Calu3 (cell line): ENCODE measurements at regions of chr6 and their contacts with region 1.

Region 1: GRCh38 chr6:144334131-144334708 is 49.1 kb downstream of the UTRN start:
- DNase-seq: no peak
- H3K4me3 Mint-ChIP-seq: peak overlapping the region; percentile 40
- H3K27ac Mint-ChIP-seq: no peak overlapping the region
- H3K4me1 Mint-ChIP-seq: peaks cover 64% of the 10 kb centered on the region
- H3K27me3 Mint-ChIP-seq: no peaks in the 10 kb centered on the region
- CTCF ChIP-seq: no peak

Region 2: DNA sequence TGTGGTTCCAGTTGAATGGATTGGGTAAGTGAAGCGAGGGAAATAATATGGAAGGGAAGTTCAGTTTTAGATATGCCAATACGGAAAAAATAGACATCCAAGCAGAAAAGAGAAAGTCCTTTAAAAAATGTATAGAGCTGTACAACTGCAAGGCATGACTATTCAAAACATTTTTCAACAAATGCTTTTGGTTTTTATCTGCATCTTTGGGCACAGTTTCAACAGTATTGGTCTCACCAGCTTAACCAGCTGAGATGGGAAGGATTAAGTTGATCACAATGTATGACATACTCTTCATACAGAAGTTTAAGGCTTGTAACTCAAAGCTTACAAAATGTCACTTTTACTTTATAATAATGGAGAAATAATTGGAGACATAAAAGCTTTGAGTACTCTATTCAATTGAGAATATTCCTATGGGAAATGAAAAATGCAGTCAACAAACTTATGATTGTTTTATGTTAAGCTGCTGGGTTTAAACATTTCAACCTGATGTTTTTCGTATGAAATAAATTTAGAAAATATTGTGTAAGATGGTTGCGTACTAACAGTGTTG is 65.3 kb before region 1 on chr6:
- CTCF ChIA-PET with region 1: no interaction called
- intact Hi-C with region 1: no loop called
- DNase-seq: no peak
- H3K4me3 Mint-ChIP-seq: no peak overlapping the region
- H3K27ac Mint-ChIP-seq: no peak overlapping the region
- H3K4me1 Mint-ChIP-seq: peaks cover 7% of the 10 kb centered on the region
- H3K27me3 Mint-ChIP-seq: no peaks in the 10 kb centered on the region
- CTCF ChIP-seq: no peak

Region 3: GRCh38 chr6:144360401-144360800 is 26.2 kb after region 1 on chr6:
- CTCF ChIA-PET with region 1: interaction called, 12 read pairs
- intact Hi-C with region 1: no loop called
- DNase-seq: peak; percentile 30
- H3K4me3 Mint-ChIP-seq: no peak overlapping the region
- H3K27ac Mint-ChIP-seq: no peak overlapping the region
- H3K4me1 Mint-ChIP-seq: peaks cover 21% of the 10 kb centered on the region
- H3K27me3 Mint-ChIP-seq: no peaks in the 10 kb centered on the region
- CTCF ChIP-seq: no peak